K562 (cell line): ENCODE measurements at regions of chr2 and their contacts with region 1.

Region 1: DNA sequence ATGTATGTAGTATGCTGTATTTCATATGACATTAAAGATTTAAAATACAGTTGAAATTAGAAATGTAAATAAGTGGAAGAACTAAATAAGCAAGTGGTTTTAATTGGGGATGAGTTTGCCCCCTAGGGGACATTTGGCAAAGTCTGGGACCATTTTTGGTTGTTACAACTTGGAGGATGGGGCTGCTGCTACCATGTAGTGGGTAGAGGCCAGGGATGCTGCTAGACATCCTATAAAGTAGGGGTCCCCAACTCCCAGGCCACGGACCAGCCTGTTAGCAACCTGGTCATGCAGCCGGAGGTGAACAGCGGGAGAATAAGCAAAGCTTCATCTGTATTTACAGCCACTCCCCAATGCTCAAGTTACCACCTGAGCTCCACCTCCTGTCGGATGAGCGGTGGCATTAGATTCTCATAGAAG is 27.9 kb upstream of the ASNSD1 start:
- DNase-seq: peak in 2 of 4 experiments; percentile 14 to 47
- ATAC-seq: peak; percentile 82
- H3K4me3 ChIP-seq: no peak overlapping the region
- H3K27ac ChIP-seq: no peak overlapping the region
- H3K4me1 ChIP-seq: peaks cover 0 to 5% of the 10 kb centered on the region in 2 experiments; a peak in 1 of 5 replicates
- H3K27me3 ChIP-seq: no peaks in the 10 kb centered on the region
- CTCF ChIP-seq: peak in 2 of 3 experiments; percentile 67; a peak in 5 of 6 replicates
- EP300 ChIP-seq: no peak
- POLR2A ChIP-seq: no peak
- RAD21 ChIP-seq: peak; percentile 54 to 65

Region 2: DNA sequence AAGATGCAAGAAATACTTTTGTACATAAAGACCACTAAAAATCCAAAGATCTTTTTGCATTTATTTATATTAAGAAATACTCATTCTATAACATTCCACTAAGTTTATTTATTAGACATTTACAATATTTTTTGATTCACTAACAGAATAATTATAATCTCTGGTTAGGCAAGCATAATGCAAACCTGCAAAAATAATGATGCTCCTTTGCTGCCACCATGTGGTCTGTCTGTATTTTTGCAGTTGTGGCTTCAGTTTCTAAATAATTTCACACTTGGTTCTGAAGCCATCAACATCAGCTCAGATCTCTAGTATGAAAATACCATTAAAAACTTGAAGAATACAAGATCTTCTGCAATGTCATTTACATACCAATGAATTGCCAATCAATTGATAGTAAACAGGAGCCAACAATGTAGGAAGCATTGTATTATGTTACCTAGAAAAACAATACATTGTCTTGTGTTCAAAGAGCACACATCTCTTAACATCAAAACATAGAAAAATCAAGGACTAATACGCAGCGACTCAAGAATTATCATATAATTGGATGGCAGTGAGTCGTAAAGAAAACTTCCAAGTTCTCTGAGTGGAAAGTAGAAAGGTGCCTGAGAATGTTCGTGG is 221.0 kb before region 1 on chr2:
- CTCF ChIA-PET with region 1: no interaction called
- POLR2A ChIA-PET with region 1: no interaction called
- in situ Hi-C with region 1: no loop called
- intact Hi-C with region 1: no loop called
- DNase-seq: peak; percentile 13 to 43 (median 18)
- ATAC-seq: peak; percentile 71
- H3K4me3 ChIP-seq: no peak overlapping the region
- H3K27ac ChIP-seq: no peak overlapping the region
- H3K4me1 ChIP-seq: no peaks in the 10 kb centered on the region
- H3K27me3 ChIP-seq: no peaks in the 10 kb centered on the region
- CTCF ChIP-seq: peak; percentile 49 to 76 (median 58); a peak in 5 of 6 replicates
- EP300 ChIP-seq: no peak
- POLR2A ChIP-seq: no peak
- RAD21 ChIP-seq: peak; percentile 76 to 78

Region 3: DNA sequence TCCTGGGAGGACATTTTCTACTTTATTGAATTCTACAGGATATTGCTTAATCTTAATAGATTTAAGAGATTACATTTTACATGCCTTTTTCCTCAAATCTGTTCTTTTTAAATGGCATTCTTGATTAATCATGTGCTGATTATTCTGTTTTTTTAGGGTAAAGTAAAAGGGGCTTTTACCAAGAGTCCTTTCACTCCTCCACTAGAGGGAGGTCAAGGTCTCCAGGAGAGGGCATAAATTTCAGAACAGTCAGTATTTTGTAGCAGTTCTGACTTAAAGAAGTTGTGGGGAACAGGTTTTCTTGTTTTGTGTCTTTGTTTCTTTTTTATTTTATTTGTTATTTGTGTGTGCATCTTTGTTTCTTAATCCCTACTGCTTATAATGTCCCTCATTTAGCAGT is 166.7 kb before region 1 on chr2:
- CTCF ChIA-PET with region 1: interaction called, 8 read pairs
- POLR2A ChIA-PET with region 1: no interaction called
- in situ Hi-C with region 1: no loop called
- intact Hi-C with region 1: loop called (anchors 1 kb)
- DNase-seq: peak; percentile 17 to 45 (median 24)
- ATAC-seq: peak; percentile 83
- H3K4me3 ChIP-seq: no peak overlapping the region
- H3K27ac ChIP-seq: no peak overlapping the region
- H3K4me1 ChIP-seq: peaks cover 0 to 7% of the 10 kb centered on the region in 2 experiments; a peak in 2 of 5 replicates
- H3K27me3 ChIP-seq: no peaks in the 10 kb centered on the region
- CTCF ChIP-seq: peak; percentile 46 to 61 (median 54); a peak in 5 of 6 replicates
- EP300 ChIP-seq: no peak
- POLR2A ChIP-seq: no peak
- RAD21 ChIP-seq: peak; percentile 48 to 65

Region 4: GRCh38 chr2:189483998-189484740 is 149.2 kb before region 1 on chr2:
- CTCF ChIA-PET with region 1: no interaction called
- POLR2A ChIA-PET with region 1: no interaction called
- in situ Hi-C with region 1: loop called (anchors 10 kb)
- intact Hi-C with region 1: no loop called
- DNase-seq: no peak
- ATAC-seq: no peak; the same call in 2 of the 3 replicates
- H3K4me3 ChIP-seq: no peak overlapping the region
- H3K27ac ChIP-seq: no peak overlapping the region
- H3K4me1 ChIP-seq: no peaks in the 10 kb centered on the region; a peak in 1 of 5 replicates
- H3K27me3 ChIP-seq: no peaks in the 10 kb centered on the region
- CTCF ChIP-seq: no peak
- EP300 ChIP-seq: no peak
- POLR2A ChIP-seq: no peak
- RAD21 ChIP-seq: no peak

Region 5: DNA sequence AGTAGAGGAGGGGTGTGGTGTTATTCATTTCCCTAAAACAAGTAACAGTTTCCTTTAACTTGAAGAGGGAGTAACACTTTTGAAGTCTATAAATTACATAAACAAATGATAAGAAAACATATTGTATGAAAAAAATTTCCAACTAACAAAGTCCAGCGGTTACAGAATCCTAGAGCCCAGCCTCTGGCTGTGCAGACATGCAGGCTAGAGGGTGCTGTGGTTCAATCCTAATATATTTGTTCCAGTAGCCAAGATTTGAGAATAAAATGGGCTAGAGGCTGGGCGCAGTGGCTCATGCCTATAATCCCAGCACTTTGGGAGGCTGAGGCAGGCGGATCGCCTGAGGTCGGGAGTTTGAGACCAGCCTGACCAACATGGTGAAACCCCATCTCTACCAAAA is 135.2 kb before region 1 on chr2:
- CTCF ChIA-PET with region 1: no interaction called
- POLR2A ChIA-PET with region 1: no interaction called
- in situ Hi-C with region 1: no loop called
- intact Hi-C with region 1: loop called (anchors 1 kb)
- DNase-seq: no peak
- ATAC-seq: peak; percentile 77
- H3K4me3 ChIP-seq: no peak overlapping the region
- H3K27ac ChIP-seq: no peak overlapping the region
- H3K4me1 ChIP-seq: no peaks in the 10 kb centered on the region
- H3K27me3 ChIP-seq: no peaks in the 10 kb centered on the region
- CTCF ChIP-seq: peak; percentile 9 to 41 (median 29); a peak in 4 of 6 replicates
- EP300 ChIP-seq: no peak
- POLR2A ChIP-seq: no peak
- RAD21 ChIP-seq: peak in 1 of 2 experiments; percentile 54; a peak in 3 of 4 replicates

Region 6: DNA sequence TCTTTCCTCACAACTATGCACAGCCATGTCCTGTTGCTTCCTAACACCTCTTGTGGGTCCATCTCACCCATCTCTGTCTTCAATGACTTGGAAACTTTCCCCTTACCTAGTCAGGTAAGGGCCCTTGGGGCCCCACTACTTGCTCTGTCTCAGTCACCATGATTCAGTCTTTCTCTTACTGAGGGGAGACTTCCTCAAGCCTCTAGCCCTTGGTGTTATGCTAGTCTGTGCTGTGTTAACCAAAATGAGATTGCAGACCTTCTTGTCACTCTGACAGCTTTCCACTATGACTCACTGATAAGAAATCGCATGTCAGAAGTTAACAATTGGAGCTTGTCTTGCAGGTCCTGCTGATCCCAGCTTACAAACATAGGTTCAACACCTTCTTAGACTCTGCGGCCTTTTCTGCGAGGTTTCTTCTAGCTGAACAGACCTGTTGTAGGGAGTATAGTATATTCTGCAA is 126.9 kb before region 1 on chr2:
- CTCF ChIA-PET with region 1: interaction called, 3 read pairs
- POLR2A ChIA-PET with region 1: no interaction called
- in situ Hi-C with region 1: no loop called
- intact Hi-C with region 1: loop called (anchors 1 kb)
- DNase-seq: peak; percentile 57 to 87 (median 70)
- ATAC-seq: peak; percentile 98
- H3K4me3 ChIP-seq: no peak overlapping the region
- H3K27ac ChIP-seq: peak overlapping the region; percentile 93
- H3K4me1 ChIP-seq: peaks cover 12 to 25% of the 10 kb centered on the region in 2 experiments
- H3K27me3 ChIP-seq: no peaks in the 10 kb centered on the region
- CTCF ChIP-seq: no peak
- EP300 ChIP-seq: peak; percentile 91
- POLR2A ChIP-seq: no peak
- RAD21 ChIP-seq: 0 out of 4 replicates have a peak, but pooled peaks have one; percentile 4 to 24

Region 7: DNA sequence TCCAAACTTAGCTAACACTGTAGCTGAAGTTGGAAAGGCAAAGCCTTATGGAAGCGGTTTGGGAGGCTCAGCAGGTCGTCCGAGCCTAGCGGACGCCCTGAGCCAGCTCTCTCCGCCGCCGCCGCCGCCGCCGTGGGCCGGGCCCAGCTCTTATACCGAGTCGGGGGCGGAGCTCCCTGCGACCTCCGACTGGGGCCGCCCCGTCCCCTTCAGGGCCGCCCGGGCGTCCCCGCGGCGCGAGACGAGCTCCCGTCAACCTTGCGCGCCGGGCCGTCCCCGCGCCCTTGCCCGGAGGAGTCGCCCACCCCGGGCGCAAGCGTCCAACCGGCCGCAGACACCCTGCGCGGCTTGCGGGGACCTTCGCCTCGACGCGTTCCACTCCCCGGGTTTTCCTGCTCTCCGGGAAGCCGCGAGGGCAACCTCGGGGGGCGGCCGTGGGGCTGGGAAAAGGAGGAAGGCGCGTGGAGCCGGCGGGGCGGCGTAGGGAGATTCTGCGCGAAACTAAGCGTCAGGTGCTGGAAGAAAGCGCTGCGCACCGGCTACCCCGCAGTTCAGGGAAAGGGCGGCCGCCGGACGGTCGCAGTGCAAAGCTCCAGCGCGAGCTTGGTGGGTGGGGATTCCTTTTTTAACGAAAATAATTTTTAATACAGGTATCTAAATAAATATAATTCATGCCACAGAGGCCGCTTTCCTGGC is 52.6 kb before region 1 on chr2 and contains the start of gene SLC40A1:
- CTCF ChIA-PET with region 1: no interaction called
- POLR2A ChIA-PET with region 1: interaction called, 5 read pairs
- in situ Hi-C with region 1: loop called (anchors 5 kb)
- intact Hi-C with region 1: loop called (anchors 1 kb)
- DNase-seq: peak; percentile 69 to 82 (median 72)
- ATAC-seq: peak; percentile 86
- H3K4me3 ChIP-seq: peak within 1 kb of the TSS; percentile 53
- H3K27ac ChIP-seq: peak within 1 kb of the TSS; percentile 95
- H3K4me1 ChIP-seq: peaks cover 0 to 23% of the 10 kb centered on the region in 2 experiments; a peak in 3 of 5 replicates
- H3K27me3 ChIP-seq: no peaks in the 10 kb centered on the region
- CTCF ChIP-seq: no peak
- EP300 ChIP-seq: no peak
- POLR2A ChIP-seq: peak; percentile 70
- RAD21 ChIP-seq: no peak
- polyA plus RNA-seq, gene SLC40A1: 53.3 to 54.9 TPM

Region 8: DNA sequence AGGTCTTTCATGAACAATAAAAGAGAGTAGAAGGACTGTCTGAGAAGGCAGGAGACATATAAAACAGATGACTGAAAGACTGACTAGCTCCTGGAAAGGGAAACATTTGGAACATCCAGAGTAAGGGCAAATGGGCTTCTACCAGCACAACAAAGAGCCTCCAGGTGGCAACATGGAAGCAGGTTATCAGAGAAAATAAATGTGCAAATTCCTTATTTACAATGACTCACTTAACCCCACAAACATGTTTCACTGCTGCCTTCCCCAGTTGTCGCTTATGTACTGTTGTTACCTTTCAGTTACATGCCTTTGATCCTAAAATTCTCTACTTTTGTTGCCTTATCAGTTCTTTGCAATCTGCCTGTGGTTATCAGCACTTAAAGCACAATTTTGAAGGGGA is 569.2 kb after region 1 on chr2:
- CTCF ChIA-PET with region 1: no interaction called
- POLR2A ChIA-PET with region 1: no interaction called
- in situ Hi-C with region 1: no loop called
- intact Hi-C with region 1: no loop called
- DNase-seq: no peak
- ATAC-seq: no peak
- H3K4me3 ChIP-seq: no peak overlapping the region
- H3K27ac ChIP-seq: no peak overlapping the region
- H3K4me1 ChIP-seq: peaks cover 0 to under 1% of the 10 kb centered on the region in 2 experiments; a peak in 3 of 5 replicates
- H3K27me3 ChIP-seq: no peaks in the 10 kb centered on the region
- CTCF ChIP-seq: no peak
- EP300 ChIP-seq: no peak
- POLR2A ChIP-seq: peak; percentile 46; the same call in 1 of the 2 replicates
- RAD21 ChIP-seq: no peak